Common myeloid progenitor, CD34-positive (primary cell): ENCODE measurements at regions of chr6 and their contacts with region 1.

Region 1: GRCh38 chr6:52284460-52285176 is at the start of gene MCM3:
- DNase-seq: peak; percentile 98 to 99 (median 99)
- H3K4me3 ChIP-seq: peak within 1 kb of the TSS; percentile 59 to 97 (median 89)
- H3K27ac ChIP-seq: peak within 1 kb of the TSS; percentile 36 to 77
- H3K4me1 ChIP-seq: peaks cover 8 to 39% (median 24%) of the 10 kb centered on the region in 4 experiments
- H3K27me3 ChIP-seq: no peaks in the 10 kb centered on the region

Region 2: DNA sequence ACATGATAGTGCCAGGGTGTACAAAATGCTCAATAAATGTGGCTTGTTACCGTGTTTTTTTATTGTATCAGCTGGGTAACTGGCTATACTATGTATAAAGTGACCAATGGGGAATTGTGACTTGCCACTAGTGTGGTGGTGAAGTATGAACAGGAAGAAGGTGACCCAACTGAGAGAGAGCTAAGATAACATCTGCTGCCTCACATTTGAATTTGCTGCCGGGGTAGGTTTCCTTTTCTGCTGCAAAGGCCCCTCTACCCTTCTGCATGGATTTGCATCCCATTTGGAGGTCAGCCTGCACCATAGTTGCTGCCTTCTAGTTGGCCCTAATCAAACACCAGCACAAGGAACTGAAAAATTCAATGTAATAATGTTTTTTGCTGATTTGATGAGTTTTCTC is 74.4 kb before region 1 on chr6:
- CTCF ChIA-PET with region 1: no interaction called
- POLR2A ChIA-PET with region 1: no interaction called
- DNase-seq: no peak
- H3K4me3 ChIP-seq: no peak overlapping the region
- H3K27ac ChIP-seq: no peak overlapping the region
- H3K4me1 ChIP-seq: no peaks in the 10 kb centered on the region
- H3K27me3 ChIP-seq: no peaks in the 10 kb centered on the region

Region 3: DNA sequence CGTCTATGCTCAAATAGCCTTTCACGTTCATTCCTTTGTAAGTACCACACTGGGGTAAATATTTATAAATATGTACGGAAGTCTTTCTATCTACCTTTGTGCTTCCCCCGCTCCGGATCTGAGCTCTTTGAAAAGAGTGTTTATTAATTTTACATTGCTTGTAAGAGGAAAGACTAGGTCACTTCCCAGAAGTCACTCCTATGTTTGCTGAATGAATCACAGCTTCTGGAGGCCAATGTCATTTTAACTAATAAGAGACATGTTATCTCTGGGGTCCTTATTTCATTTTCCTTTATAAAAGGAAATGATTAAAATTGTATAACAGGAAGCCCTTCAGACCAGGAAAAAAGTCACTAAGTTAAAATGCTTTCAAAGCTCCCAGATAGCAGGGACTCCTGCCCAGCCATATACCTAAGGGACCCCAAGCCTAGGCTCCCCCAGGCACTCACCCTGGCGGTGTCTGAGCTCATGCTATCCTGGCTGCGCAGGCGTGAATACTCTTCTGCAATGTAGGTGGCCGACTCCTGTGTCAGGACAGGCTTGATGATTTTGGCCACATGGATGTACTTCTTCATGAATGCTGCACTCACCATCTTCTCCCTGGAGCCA is 12.7 kb before region 1 on chr6:
- CTCF ChIA-PET with region 1: interaction called, 11 read pairs
- POLR2A ChIA-PET with region 1: no interaction called
- DNase-seq: no peak
- H3K4me3 ChIP-seq: no peak overlapping the region
- H3K27ac ChIP-seq: peak overlapping the region in 1 of 2 experiments; percentile 15
- H3K4me1 ChIP-seq: no peaks in the 10 kb centered on the region
- H3K27me3 ChIP-seq: no peaks in the 10 kb centered on the region

Region 4: GRCh38 chr6:52361945-52362442 is 77.4 kb after region 1 on chr6 and contains the start of gene PAQR8:
- CTCF ChIA-PET with region 1: interaction called, 20 read pairs
- POLR2A ChIA-PET with region 1: no interaction called
- DNase-seq: peak; percentile 80 to 90 (median 88)
- H3K4me3 ChIP-seq: peak within 1 kb of the TSS; percentile 81 to 97 (median 87)
- H3K27ac ChIP-seq: peak within 1 kb of the TSS; percentile 42 to 78
- H3K4me1 ChIP-seq: peaks cover 5 to 22% (median 19%) of the 10 kb centered on the region in 4 experiments
- H3K27me3 ChIP-seq: no peaks in the 10 kb centered on the region

Region 5: GRCh38 chr6:52399511-52400312 is 115.1 kb after region 1 on chr6:
- CTCF ChIA-PET with region 1: interaction called, 80 read pairs
- POLR2A ChIA-PET with region 1: no interaction called
- DNase-seq: peak; percentile 48 to 60 (median 54)
- H3K4me3 ChIP-seq: no peak overlapping the region
- H3K27ac ChIP-seq: no peak overlapping the region
- H3K4me1 ChIP-seq: peaks cover 14 to 34% (median 31%) of the 10 kb centered on the region in 4 experiments
- H3K27me3 ChIP-seq: no peaks in the 10 kb centered on the region